ENCODE measurements at regions of chr15 and their contacts with region 1.

Region 1: DNA sequence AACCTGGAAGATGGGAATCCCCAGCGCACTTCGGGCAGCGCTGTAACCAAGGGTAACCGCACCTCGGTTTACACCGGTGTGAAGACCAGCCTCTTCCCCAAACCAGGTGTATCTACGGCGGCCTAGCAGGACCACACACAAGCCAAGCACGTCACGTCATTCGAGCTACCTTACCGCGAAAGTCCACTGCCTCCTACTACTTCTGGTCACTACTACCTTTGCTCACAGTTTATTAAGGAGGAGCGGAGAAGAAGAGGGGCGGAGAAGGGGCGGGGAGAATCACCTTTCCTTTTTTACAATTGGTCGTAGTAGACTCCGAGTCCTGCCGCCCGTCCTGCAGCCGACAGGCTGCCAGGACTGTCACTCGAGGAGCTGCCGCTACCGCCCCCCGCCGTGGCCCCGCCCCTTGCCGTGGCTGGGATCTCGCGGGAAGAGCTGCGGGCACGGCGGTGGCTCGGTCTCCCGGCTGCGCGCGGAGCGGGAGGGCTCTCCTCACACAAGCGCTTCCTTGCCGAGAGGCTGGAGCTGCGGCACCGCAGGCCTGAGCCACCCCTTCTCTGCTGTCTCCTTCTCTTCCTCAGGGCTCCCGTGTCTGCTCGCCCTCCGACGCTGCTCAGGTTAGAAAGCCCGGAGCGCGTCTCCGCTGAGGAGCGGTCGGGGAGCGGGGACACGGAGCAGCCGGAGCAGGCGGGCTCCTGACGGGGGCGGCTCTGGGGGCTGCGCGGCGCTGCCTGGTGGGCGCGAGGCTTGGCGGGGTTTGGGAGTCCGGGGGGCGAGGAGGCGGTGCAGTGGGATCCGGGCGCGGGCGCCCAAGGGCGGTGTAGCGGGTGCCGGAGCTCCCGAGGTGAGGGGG is at the start of gene GLCE:
- DNase-seq: peak; percentile 97
- ATAC-seq: peak; percentile 91
- H3K4me3 ChIP-seq: peak within 1 kb of the TSS; percentile 93
- H3K27ac ChIP-seq: peak within 1 kb of the TSS; percentile 4; the same call in 1 of the 2 replicates
- H3K4me1 ChIP-seq: peaks cover 21% of the 10 kb centered on the region
- H3K27me3 ChIP-seq: no peaks in the 10 kb centered on the region
- CTCF ChIP-seq: no peak
- total RNA-seq, gene GLCE: 11.1 and 15.4 TPM in 2 replicates

Region 2: DNA sequence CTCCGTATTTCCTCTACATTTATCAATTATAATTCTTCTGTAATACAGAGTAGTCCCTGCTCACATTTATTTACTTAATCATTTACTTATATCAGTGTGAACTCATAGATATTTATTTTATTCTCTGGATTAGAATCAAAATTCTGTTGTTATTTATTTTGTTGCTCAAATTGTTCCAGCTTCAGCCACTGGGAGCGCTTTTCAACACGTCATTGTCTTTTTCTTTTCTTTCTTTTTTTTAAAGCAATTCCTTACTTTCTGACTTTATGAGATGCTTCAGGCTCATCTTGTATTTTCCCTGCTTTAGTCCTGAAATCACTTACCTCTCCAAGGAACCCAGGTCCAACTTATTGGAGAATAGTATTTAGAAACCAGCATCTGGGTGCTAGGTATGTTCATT is 53.4 kb after region 1 on chr15:
- CTCF ChIA-PET with region 1: no interaction called
- POLR2A ChIA-PET with region 1: interaction called, 12 read pairs
- intact Hi-C with region 1: no loop called
- DNase-seq: no peak
- ATAC-seq: no peak
- H3K4me3 ChIP-seq: no peak overlapping the region
- H3K27ac ChIP-seq: no peak overlapping the region
- H3K4me1 ChIP-seq: peaks cover 5% of the 10 kb centered on the region; the same call in 1 of the 2 replicates
- H3K27me3 ChIP-seq: no peaks in the 10 kb centered on the region
- CTCF ChIP-seq: peak; percentile 53; the same call in 1 of the 2 replicates

Region 3: GRCh38 chr15:69225355-69226025 is 65.1 kb after region 1 on chr15:
- CTCF ChIA-PET with region 1: no interaction called
- POLR2A ChIA-PET with region 1: interaction called, 3 read pairs
- intact Hi-C with region 1: loop called (anchors 2 kb)
- DNase-seq: peak; percentile 52
- ATAC-seq: peak; percentile 40; the same call in 1 of the 2 replicates
- H3K4me3 ChIP-seq: no peak overlapping the region
- H3K27ac ChIP-seq: no peak overlapping the region
- H3K4me1 ChIP-seq: peaks cover 4% of the 10 kb centered on the region; the same call in 1 of the 2 replicates
- H3K27me3 ChIP-seq: no peaks in the 10 kb centered on the region
- CTCF ChIP-seq: peak; percentile 58

Measured in PC-3 (cell line).